ENCODE measurements at regions of chr10 and their contacts with region 1.

Region 1: GRCh38 chr10:72114706-72115450 is 26.5 kb upstream of the SPOCK2 start:
- DNase-seq: no peak

Region 2: DNA sequence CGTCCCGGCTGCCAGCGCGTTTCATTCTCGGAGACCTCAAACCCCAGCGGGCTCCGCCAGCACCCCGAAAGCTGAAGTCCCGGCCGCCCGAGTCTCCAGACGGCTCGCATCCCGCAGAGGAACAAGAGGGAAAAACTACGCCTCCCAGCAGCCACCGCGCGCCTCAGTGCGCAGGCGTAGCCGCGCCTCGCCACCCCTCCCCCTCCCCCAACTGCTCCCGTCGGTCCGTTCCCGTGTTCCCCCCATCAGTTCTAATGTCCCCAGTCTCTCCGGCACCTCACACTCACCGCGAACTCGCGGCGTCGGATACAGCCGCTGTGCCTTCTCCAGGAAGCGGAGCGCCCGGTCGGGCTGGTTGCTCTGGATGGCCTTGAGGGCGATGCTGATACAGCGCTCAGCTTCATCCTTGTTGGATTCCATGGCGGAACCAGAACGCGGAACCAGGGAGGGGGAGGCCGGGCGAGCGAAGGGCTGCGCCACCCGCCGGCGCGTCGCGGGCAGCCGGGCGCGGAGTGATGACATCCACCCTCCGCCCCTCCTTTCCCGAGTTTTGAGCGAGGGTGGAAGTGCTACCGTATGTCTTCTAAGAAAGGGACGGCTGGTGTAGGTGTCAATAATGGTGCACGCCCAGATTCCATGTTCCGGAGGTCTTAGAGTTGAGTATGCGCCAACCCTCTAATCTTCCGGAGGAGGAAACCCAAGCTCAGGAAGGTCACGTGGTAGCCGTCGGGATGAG is 239.8 kb after region 1 on chr10 and contains the start of gene DNAJB12:
- intact Hi-C with region 1: no loop called
- DNase-seq: peak; percentile 97
- total RNA-seq, gene DNAJB12: 25.3 to 26.4 TPM

Region 3: DNA sequence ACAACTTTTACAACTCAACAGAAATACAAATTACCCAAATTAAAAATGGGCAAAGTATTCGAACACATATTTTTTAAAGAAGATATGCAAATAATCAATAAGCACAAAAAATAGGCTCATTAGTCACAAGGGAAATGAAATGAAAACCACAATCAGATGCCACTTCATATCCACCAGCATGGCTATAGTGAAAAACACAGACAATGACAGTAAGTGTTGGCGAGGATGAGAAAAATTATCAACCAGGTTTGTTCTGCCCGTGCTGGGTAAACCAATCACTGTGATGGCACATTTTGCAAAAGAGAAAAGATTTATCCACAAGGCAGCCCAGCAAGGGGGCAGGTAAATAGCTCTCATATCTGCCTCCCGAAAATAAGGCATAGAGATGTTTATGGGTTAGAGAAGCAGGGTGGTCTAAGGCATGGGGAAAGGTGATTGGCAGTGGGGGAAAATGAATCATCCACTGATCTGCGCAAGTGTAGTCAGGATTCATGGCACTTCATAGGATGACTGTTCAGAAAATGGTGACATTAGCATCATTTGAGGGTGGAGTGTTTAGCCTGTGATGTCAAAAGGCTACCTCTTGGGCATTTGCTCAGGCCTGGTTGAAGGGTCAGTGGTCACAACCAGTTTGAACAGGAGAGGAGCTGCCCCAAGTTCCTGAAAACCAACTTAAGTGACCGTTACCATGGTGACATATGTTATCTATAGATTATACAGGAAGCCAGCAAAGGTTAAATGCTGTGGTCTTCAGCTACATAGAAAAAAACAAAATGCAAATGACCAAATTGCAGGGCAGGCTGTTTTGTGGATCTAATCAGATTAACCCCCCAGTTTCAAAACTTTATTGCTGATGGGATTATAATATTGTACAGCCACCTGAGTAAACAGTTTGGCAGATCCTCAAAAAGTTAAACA is 1251.8 kb after region 1 on chr10:
- intact Hi-C with region 1: loop called in 1 of 2 experiments (anchors 5 kb)
- DNase-seq: no peak